Endothelial cell of umbilical vein (primary cell): ENCODE measurements at regions of chr12 and their contacts with region 1.

Region 1: DNA sequence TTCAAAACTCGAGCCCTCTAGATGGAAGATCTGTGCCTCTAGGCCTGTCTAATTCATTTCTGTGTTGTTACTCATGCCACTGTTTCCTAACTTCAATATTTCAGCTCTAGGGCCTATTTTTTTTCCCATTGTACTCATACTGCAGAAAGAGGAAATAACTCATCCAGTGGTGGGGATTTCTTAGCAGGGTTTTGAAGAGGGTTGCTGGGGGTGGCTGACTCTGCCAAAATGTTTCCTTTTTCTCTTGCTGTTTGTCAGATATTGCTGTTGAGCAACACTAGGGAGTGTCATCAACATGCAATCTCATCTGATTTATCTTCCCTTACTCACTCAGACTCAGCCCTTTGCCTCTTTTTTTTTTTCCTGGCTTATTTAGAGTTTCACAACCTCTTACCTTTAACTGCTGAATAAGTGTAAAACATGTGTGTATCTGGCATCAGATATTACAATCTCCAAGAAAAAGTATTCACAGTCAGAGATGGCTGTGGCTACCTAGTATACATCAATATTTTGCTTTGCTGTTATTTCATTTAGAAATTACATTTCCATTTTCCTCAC is 189.5 kb downstream of the DUSP6 start:
- DNase-seq: peak; percentile 96
- H3K4me3 ChIP-seq: no peak overlapping the region
- H3K27ac ChIP-seq: peak overlapping the region; percentile 97
- H3K4me1 ChIP-seq: peaks cover 61% of the 10 kb centered on the region
- H3K27me3 ChIP-seq: no peaks in the 10 kb centered on the region
- CTCF ChIP-seq: no peak
- POLR2A ChIP-seq: peak; percentile 25

Region 2: DNA sequence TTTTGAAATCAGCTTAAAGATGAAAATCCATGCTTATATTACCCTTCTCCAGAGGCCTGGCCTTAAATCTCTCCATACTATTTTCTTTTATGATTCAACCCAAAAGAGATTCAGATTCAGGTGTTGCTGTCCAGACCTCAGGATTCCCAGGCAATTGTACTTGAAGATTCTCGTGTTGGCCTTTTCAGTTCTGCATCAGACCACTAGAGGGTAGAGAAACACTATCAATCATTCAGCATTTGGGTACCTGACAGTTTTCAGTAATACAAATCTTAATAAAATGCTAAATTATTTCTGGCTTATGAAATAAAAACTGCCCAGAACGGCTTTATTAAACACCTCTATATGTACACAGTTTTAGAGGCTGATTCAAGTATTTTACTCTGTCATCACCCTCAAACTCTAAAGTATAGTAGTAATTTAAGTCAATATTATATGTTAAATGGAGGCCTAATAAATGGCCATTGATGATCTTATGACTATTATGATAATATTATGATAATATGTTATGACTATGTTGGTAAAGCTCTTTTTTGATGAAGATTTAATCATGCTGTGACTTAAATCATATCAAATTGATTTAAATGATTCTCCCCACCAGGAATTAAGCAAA is 111.6 kb before region 1 on chr12:
- CTCF ChIA-PET with region 1: no interaction called
- POLR2A ChIA-PET with region 1: no interaction called
- dilution Hi-C with region 1: no loop called
- intact Hi-C with region 1: loop called (anchors 10 kb)
- DNase-seq: peak; percentile 88
- H3K4me3 ChIP-seq: no peak overlapping the region
- H3K27ac ChIP-seq: no peak overlapping the region
- H3K4me1 ChIP-seq: no peaks in the 10 kb centered on the region
- H3K27me3 ChIP-seq: no peaks in the 10 kb centered on the region
- CTCF ChIP-seq: peak; percentile 62
- POLR2A ChIP-seq: no peak

Region 3: DNA sequence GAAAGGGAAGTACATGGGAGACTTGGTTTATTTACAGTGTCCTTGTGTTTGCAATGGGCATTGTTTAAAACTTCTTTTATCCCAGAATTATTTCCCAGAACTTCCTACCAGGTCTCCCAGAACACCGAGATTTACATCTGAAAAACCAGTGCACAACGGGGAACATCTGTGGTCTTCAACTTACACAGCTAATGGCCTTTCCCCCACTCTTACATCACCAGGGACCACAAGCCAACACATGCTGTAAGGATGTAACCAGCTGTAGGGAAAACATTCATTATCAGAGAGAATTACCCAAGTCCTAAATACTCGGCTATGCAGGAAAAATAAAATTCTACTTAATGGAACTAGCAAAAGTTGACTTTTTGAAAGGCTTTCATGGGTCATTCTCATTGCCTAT is 78.0 kb before region 1 on chr12:
- CTCF ChIA-PET with region 1: interaction called, 3 read pairs
- POLR2A ChIA-PET with region 1: no interaction called
- dilution Hi-C with region 1: no loop called
- intact Hi-C with region 1: loop called (anchors 1 kb)
- DNase-seq: peak; percentile 56
- H3K4me3 ChIP-seq: no peak overlapping the region
- H3K27ac ChIP-seq: peak overlapping the region; percentile 69
- H3K4me1 ChIP-seq: peaks cover 48% of the 10 kb centered on the region
- H3K27me3 ChIP-seq: no peaks in the 10 kb centered on the region
- CTCF ChIP-seq: no peak
- POLR2A ChIP-seq: no peak

Region 4: DNA sequence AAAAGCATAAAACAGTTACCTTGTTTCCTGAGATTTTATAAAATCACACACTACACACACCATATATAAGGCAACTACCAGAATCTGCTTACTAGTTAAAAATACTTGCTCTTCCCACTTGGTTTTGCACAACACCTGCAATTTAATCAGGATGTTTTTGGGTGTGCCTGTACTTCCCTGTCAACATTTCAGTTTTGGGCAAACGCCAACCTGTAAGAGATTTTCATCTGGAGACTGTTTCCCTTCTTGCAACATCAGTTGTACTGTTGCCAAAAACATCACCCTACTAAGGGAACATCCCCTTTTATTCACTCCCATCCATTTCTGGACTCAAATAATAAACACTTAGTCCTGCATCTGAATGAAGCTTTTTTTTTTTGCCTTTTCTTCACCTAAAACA is 17.2 kb after region 1 on chr12:
- CTCF ChIA-PET with region 1: interaction called, 3 read pairs
- POLR2A ChIA-PET with region 1: no interaction called
- dilution Hi-C with region 1: no loop called
- intact Hi-C with region 1: loop called (anchors 1 kb)
- DNase-seq: peak; percentile 91
- H3K4me3 ChIP-seq: no peak overlapping the region
- H3K27ac ChIP-seq: no peak overlapping the region
- H3K4me1 ChIP-seq: peaks cover 18% of the 10 kb centered on the region
- H3K27me3 ChIP-seq: no peaks in the 10 kb centered on the region
- CTCF ChIP-seq: no peak
- POLR2A ChIP-seq: peak; percentile 27

Region 5: GRCh38 chr12:89236748-89237388 is 74.1 kb after region 1 on chr12:
- CTCF ChIA-PET with region 1: no interaction called
- POLR2A ChIA-PET with region 1: no interaction called
- dilution Hi-C with region 1: no loop called
- intact Hi-C with region 1: loop called (anchors 2 kb)
- DNase-seq: no peak
- H3K4me3 ChIP-seq: no peak overlapping the region
- H3K27ac ChIP-seq: peak overlapping the region; percentile 39
- H3K4me1 ChIP-seq: peaks cover 44% of the 10 kb centered on the region
- H3K27me3 ChIP-seq: no peaks in the 10 kb centered on the region
- CTCF ChIP-seq: no peak
- POLR2A ChIP-seq: no peak

Region 6: GRCh38 chr12:89451841-89452251 is 289.1 kb after region 1 on chr12:
- CTCF ChIA-PET with region 1: no interaction called
- POLR2A ChIA-PET with region 1: no interaction called
- dilution Hi-C with region 1: no loop called
- intact Hi-C with region 1: loop called (anchors 2 kb)
- DNase-seq: peak; percentile 74
- H3K4me3 ChIP-seq: no peak overlapping the region
- H3K27ac ChIP-seq: peak overlapping the region; percentile 65
- H3K4me1 ChIP-seq: peaks cover 53% of the 10 kb centered on the region
- H3K27me3 ChIP-seq: no peaks in the 10 kb centered on the region
- CTCF ChIP-seq: no peak
- POLR2A ChIP-seq: peak; percentile 15